ENCODE measurements at regions of chr9 and their contacts with region 1.

Region 1: GRCh38 chr9:15277400-15278090 is 29.5 kb downstream of the TTC39B start:
- DNase-seq: peak; percentile 53
- ATAC-seq: no peak
- H3K4me3 ChIP-seq: no peak overlapping the region
- H3K27ac ChIP-seq: no peak overlapping the region
- H3K4me1 ChIP-seq: no peaks in the 10 kb centered on the region; the same call in 1 of the 2 replicates
- H3K27me3 ChIP-seq: no peaks in the 10 kb centered on the region
- CTCF ChIP-seq: peak; percentile 64

Region 2: DNA sequence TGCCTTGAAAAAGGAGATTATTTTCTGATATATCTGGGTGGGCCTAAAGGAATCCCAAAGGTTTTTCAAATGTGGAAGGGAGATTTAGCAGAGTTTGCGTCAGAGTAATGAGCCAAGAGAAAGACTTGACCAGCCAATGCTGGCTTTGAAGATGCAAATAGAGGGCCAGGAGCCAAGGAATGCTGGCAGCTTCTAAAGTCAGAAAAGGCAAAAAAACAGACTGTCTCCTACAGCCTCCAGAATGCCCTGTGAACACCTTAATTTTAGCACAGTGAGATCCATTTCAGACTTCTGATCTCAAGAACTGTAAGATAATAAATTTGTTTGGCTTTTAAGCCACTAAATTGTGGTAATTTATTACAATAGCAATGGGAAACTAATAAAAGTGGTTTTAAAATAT is 244.7 kb before region 1 on chr9:
- CTCF ChIA-PET with region 1: no interaction called
- POLR2A ChIA-PET with region 1: no interaction called
- intact Hi-C with region 1: no loop called
- DNase-seq: no peak
- ATAC-seq: no peak
- H3K4me3 ChIP-seq: no peak overlapping the region
- H3K27ac ChIP-seq: no peak overlapping the region
- H3K4me1 ChIP-seq: no peaks in the 10 kb centered on the region
- H3K27me3 ChIP-seq: peaks cover 11% of the 10 kb centered on the region; the same call in 1 of the 2 replicates
- CTCF ChIP-seq: no peak

Region 3: GRCh38 chr9:15262581-15262980 is 15.0 kb before region 1 on chr9:
- CTCF ChIA-PET with region 1: no interaction called
- POLR2A ChIA-PET with region 1: no interaction called
- intact Hi-C with region 1: no loop called
- DNase-seq: no peak
- ATAC-seq: no peak
- H3K4me3 ChIP-seq: no peak overlapping the region
- H3K27ac ChIP-seq: no peak overlapping the region
- H3K4me1 ChIP-seq: no peaks in the 10 kb centered on the region
- H3K27me3 ChIP-seq: no peaks in the 10 kb centered on the region
- CTCF ChIP-seq: no peak

Region 4: GRCh38 chr9:15329539-15330109 is 52.1 kb after region 1 on chr9:
- CTCF ChIA-PET with region 1: no interaction called
- POLR2A ChIA-PET with region 1: no interaction called
- intact Hi-C with region 1: no loop called
- DNase-seq: no peak
- ATAC-seq: no peak
- H3K4me3 ChIP-seq: no peak overlapping the region
- H3K27ac ChIP-seq: no peak overlapping the region
- H3K4me1 ChIP-seq: no peaks in the 10 kb centered on the region
- H3K27me3 ChIP-seq: no peaks in the 10 kb centered on the region
- CTCF ChIP-seq: no peak

Region 5: GRCh38 chr9:15403155-15403554 is 125.6 kb after region 1 on chr9:
- CTCF ChIA-PET with region 1: no interaction called
- POLR2A ChIA-PET with region 1: no interaction called
- intact Hi-C with region 1: loop called (anchors 5 kb)
- DNase-seq: peak; percentile 12
- ATAC-seq: no peak
- H3K4me3 ChIP-seq: no peak overlapping the region
- H3K27ac ChIP-seq: no peak overlapping the region
- H3K4me1 ChIP-seq: no peaks in the 10 kb centered on the region
- H3K27me3 ChIP-seq: no peaks in the 10 kb centered on the region
- CTCF ChIP-seq: peak; percentile 56

Region 6: DNA sequence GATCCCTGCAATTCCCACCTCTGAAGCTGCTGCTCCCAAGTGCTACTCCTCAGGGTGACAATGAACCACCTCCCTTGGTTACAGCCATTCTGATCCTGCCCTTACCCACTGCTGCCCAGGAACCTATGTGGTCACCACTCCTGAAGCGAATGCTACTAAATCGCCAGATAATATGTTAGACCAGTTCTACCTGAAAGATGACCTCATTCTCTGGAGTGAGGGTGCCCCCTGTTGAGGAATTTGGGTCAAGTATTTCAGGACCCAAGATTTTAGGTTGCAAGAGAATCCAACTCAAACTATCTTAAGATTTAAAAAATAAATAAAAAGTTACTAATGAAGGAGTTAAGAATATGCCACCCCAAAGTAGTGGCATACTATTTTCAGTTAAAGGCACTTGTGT is 139.3 kb after region 1 on chr9:
- CTCF ChIA-PET with region 1: no interaction called
- POLR2A ChIA-PET with region 1: no interaction called
- intact Hi-C with region 1: loop called (anchors 1 kb)
- DNase-seq: peak; percentile 74
- ATAC-seq: peak; percentile 53
- H3K4me3 ChIP-seq: no peak overlapping the region
- H3K27ac ChIP-seq: no peak overlapping the region
- H3K4me1 ChIP-seq: peaks cover 2% of the 10 kb centered on the region
- H3K27me3 ChIP-seq: no peaks in the 10 kb centered on the region
- CTCF ChIP-seq: peak; percentile 70

Region 7: DNA sequence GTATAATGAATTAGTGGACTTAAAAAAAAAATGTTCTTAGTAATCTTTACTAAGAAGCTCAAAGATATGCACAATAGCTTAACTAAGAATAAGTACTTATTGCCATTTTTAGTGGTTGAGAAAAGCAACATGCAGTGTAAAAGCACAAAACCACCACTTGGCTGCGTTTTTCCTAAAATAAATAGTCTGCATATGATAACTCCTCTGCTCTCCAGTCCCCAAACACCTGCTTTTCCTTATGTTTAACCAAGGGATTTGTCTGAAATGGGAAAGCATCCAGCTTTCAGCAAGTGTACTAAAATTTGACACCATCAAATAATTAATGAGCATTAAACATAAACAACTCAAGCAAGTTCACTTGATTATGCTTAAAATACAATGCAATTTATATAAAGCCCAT is 191.9 kb after region 1 on chr9:
- CTCF ChIA-PET with region 1: no interaction called
- POLR2A ChIA-PET with region 1: no interaction called
- intact Hi-C with region 1: loop called (anchors 10 kb)
- DNase-seq: no peak
- ATAC-seq: no peak
- H3K4me3 ChIP-seq: no peak overlapping the region
- H3K27ac ChIP-seq: no peak overlapping the region
- H3K4me1 ChIP-seq: no peaks in the 10 kb centered on the region
- H3K27me3 ChIP-seq: no peaks in the 10 kb centered on the region
- CTCF ChIP-seq: no peak

Measured in PC-3 (cell line).